Common myeloid progenitor, CD34-positive (primary cell): ENCODE measurements at regions of chr3 and their contacts with region 1.

Region 1: GRCh38 chr3:108673988-108674661 is 83.1 kb downstream of the RETNLB start:
- DNase-seq: no peak
- H3K4me3 ChIP-seq: no peak overlapping the region
- H3K27ac ChIP-seq: no peak overlapping the region
- H3K4me1 ChIP-seq: peaks cover 0 to 2% (median 0%) of the 10 kb centered on the region in 4 experiments
- H3K27me3 ChIP-seq: no peaks in the 10 kb centered on the region

Region 2: DNA sequence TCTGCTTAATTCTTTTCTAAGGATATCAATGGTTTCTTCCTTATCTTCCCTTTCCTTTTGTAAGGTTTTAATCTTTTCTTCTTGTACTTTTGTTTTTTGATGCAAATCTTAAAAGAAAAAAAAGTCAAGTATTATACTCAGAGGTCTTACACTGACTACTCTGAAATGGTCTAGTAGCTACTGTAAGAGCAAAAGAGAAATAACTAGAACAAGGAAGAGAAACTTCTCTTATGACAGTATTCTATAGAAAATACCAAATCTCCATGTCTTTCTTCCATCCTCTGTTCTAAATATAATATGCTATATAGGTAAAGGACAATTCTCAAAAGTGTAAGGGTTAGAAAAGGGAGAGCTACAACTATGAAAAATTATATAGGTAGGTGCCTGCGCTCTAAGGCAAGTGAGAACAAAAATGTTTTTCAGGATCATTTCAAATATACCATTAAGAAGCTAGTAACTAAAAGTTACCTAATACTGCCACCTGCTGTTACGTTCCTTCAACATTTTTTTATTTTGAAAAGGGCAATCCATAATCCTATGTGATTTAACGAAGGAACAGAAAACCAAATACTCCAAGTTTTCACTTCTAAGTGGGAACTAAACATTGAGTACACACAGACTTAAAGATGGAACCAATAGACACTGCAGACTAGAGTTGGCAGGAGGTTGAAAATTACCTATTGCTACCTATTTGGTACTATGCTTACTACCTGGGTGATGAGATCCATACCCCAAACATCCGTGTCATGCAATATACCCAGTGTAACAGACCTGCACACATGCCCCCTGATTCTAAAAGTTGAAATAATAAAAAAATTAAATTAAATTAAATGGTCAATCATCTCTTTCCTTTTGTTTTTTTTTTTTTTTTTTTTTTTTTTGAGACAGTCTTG is 121.6 kb before region 1 on chr3:
- CTCF ChIA-PET with region 1: no interaction called
- POLR2A ChIA-PET with region 1: no interaction called
- DNase-seq: peak; percentile 63 to 79 (median 70)
- H3K4me3 ChIP-seq: no peak overlapping the region
- H3K27ac ChIP-seq: no peak overlapping the region
- H3K4me1 ChIP-seq: no peaks in the 10 kb centered on the region
- H3K27me3 ChIP-seq: no peaks in the 10 kb centered on the region

Region 3: DNA sequence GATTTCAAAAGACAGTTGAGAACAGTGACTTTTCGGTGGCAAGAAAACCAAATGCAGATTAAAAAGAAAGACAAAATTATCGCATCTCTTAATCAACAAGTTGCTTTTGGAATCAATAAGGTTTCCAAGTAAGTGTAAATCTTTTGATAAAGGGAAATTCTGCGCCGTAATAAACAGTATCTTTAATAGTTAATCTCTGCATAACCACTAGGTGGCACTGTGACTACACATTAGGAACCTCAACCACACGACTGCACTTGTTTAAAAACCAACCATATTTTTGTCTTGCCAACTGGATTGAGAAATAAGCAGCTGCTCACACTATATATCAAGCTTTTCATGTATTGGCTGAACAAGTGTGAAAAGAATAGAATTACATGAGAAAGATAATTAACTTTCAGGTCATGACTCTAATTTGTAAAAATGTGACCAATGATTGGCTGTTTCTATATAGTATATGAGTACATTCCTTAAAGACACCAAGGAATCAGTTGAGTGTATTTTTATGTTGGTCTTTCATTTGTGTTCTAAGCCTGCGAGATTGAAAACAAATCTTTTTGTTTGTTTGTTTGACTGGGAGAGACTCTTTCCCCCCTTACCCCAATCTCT is 11.9 kb before region 1 on chr3:
- CTCF ChIA-PET with region 1: interaction called, 23 read pairs
- POLR2A ChIA-PET with region 1: no interaction called
- DNase-seq: peak; percentile 70 to 88 (median 86)
- H3K4me3 ChIP-seq: peak overlapping the region in 1 of 7 experiments; percentile 26
- H3K27ac ChIP-seq: no peak overlapping the region
- H3K4me1 ChIP-seq: peaks cover 0 to 2% (median 0%) of the 10 kb centered on the region in 4 experiments
- H3K27me3 ChIP-seq: no peaks in the 10 kb centered on the region

Region 4: DNA sequence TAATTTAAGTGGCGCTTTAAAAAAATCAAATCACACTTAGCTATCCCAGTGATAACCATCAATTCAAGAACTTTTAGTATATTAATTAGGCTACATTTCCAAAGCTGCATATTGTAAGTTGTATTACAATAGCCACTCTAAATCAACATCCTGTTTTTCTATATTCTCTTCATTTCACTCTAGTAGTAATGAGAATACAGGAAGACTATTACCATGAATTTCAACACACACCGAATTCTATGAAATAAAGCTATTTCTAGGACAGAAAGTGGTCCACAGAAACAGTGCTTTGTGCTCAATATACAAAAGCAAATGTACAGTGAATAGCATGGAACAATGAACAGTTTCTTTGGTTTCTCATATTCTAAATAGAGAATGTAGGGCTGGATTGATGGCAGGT is 173.1 kb after region 1 on chr3:
- CTCF ChIA-PET with region 1: no interaction called
- POLR2A ChIA-PET with region 1: no interaction called
- DNase-seq: no peak
- H3K4me3 ChIP-seq: no peak overlapping the region
- H3K27ac ChIP-seq: no peak overlapping the region
- H3K4me1 ChIP-seq: no peaks in the 10 kb centered on the region
- H3K27me3 ChIP-seq: no peaks in the 10 kb centered on the region